Naive thymus-derived CD4-positive, alpha-beta T cell (primary cell): ENCODE measurements at regions of chr2 and their contacts with region 1.

Region 1: GRCh38 chr2:241149925-241150659 is at the start of gene PPP1R7:
- DNase-seq: peak; percentile 83 to 96 (median 93)
- ATAC-seq: peak; percentile 87
- H3K4me3 ChIP-seq: peak within 1 kb of the TSS; percentile 97
- H3K4me3 Mint-ChIP-seq: peak within 1 kb of the TSS; percentile 95 to 100 (median 98)
- H3K27ac ChIP-seq: peak within 1 kb of the TSS; percentile 71
- H3K27ac Mint-ChIP-seq: peak within 1 kb of the TSS; percentile 85 to 97 (median 94)
- H3K4me1 ChIP-seq: peaks cover 13 to 26% of the 10 kb centered on the region in 2 donors
- H3K4me1 Mint-ChIP-seq: peaks cover 33 to 58% (median 51%) of the 10 kb centered on the region in 7 donors
- H3K27me3 ChIP-seq: no peaks in the 10 kb centered on the region
- H3K27me3 Mint-ChIP-seq: no peaks in the 10 kb centered on the region
- total RNA-seq, gene PPP1R7: 39.2 to 105 (median 55.3) TPM

Region 2: GRCh38 chr2:240983361-240983995 is 166.6 kb before region 1 on chr2:
- CTCF ChIA-PET with region 1: interaction called, 7 read pairs
- POLR2A ChIA-PET with region 1: interaction called, 3 read pairs
- intact Hi-C with region 1: loop called (anchors 2 to 5 kb)
- DNase-seq: peak in 7 of 9 donors; percentile 27 to 55 (median 42)
- ATAC-seq: peak; percentile 78
- H3K4me3 ChIP-seq: no peak overlapping the region
- H3K4me3 Mint-ChIP-seq: peak overlapping the region in 1 of 10 donors; percentile 30
- H3K27ac ChIP-seq: no peak overlapping the region
- H3K27ac Mint-ChIP-seq: no peak overlapping the region
- H3K4me1 ChIP-seq: no peaks in the 10 kb centered on the region
- H3K4me1 Mint-ChIP-seq: peaks cover 0 to 5% (median 2%) of the 10 kb centered on the region in 7 donors
- H3K27me3 ChIP-seq: no peaks in the 10 kb centered on the region
- H3K27me3 Mint-ChIP-seq: peaks cover 0 to 14% (median 0%) of the 10 kb centered on the region in 5 donors

Region 3: GRCh38 chr2:241049739-241050623 is 100.1 kb before region 1 on chr2:
- CTCF ChIA-PET with region 1: no interaction called
- POLR2A ChIA-PET with region 1: no interaction called
- intact Hi-C with region 1: no loop called
- DNase-seq: no peak
- ATAC-seq: no peak
- H3K4me3 ChIP-seq: no peak overlapping the region
- H3K4me3 Mint-ChIP-seq: no peak overlapping the region
- H3K27ac ChIP-seq: no peak overlapping the region
- H3K27ac Mint-ChIP-seq: no peak overlapping the region
- H3K4me1 ChIP-seq: no peaks in the 10 kb centered on the region
- H3K4me1 Mint-ChIP-seq: no peaks in the 10 kb centered on the region
- H3K27me3 ChIP-seq: no peaks in the 10 kb centered on the region
- H3K27me3 Mint-ChIP-seq: peaks cover 0 to 8% (median 0%) of the 10 kb centered on the region in 5 donors

Region 4: GRCh38 chr2:241081643-241082340 is 68.3 kb before region 1 on chr2:
- CTCF ChIA-PET with region 1: interaction called, 30 read pairs
- POLR2A ChIA-PET with region 1: interaction called, 31 read pairs
- intact Hi-C with region 1: loop called (anchors 1 kb)
- DNase-seq: no peak
- ATAC-seq: no peak
- H3K4me3 ChIP-seq: no peak overlapping the region
- H3K4me3 Mint-ChIP-seq: no peak overlapping the region
- H3K27ac ChIP-seq: no peak overlapping the region
- H3K27ac Mint-ChIP-seq: peak overlapping the region in 7 of 9 donors; percentile 65 to 89 (median 80)
- H3K4me1 ChIP-seq: no peaks in the 10 kb centered on the region
- H3K4me1 Mint-ChIP-seq: peaks cover 0 to 36% (median 28%) of the 10 kb centered on the region in 7 donors
- H3K27me3 ChIP-seq: no peaks in the 10 kb centered on the region
- H3K27me3 Mint-ChIP-seq: no peaks in the 10 kb centered on the region

Region 5: DNA sequence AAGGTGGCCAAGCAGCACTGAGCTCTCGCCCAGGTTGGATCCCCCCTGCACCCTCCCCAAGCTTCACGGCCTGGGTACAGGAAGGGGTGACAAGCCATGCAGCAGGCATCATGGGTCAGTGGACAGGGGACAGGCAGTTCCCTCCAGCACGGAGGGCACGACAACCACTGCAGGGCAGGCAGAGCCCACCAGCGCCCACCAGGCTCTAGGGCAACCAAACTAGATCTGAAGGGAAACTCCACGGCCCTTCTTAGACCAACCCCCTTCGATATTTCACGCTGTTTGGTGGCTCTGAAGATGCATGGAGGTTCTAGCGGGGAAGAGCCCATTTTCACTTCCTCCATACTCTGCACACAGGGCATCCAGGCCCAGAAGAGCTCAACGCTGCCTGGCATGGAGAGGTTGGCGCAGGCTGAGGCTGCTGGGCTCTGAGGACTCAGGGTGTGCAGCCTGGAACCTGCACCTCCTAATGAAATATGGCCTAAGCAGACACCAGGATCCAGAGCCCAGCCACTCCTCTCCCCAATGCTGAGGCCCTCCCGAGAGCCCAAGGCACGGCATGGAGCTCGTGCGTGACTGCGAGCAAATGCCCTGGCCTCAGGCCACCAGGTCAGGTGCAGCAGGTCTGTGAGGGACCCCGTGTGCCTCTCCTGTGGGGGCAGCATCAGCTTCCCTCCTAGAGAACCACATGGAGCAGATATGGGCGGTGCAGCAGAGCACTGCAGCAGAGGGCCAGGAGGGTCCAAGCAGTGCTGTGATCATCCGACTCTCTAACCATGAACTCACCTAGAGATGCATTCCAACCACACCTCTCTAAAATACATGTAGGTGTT is 39.3 kb before region 1 on chr2:
- CTCF ChIA-PET with region 1: interaction called, 10 read pairs
- POLR2A ChIA-PET with region 1: interaction called, 150 read pairs
- intact Hi-C with region 1: no loop called
- DNase-seq: no peak
- ATAC-seq: peak; percentile 17
- H3K4me3 ChIP-seq: peak overlapping the region; percentile 56
- H3K4me3 Mint-ChIP-seq: peak overlapping the region; percentile 68 to 89 (median 82)
- H3K27ac ChIP-seq: peak overlapping the region; percentile 70
- H3K27ac Mint-ChIP-seq: peak overlapping the region; percentile 81 to 99 (median 98)
- H3K4me1 ChIP-seq: peaks cover 36 to 42% of the 10 kb centered on the region in 2 donors
- H3K4me1 Mint-ChIP-seq: peaks cover 22 to 64% (median 63%) of the 10 kb centered on the region in 7 donors
- H3K27me3 ChIP-seq: no peaks in the 10 kb centered on the region
- H3K27me3 Mint-ChIP-seq: no peaks in the 10 kb centered on the region

Region 6: DNA sequence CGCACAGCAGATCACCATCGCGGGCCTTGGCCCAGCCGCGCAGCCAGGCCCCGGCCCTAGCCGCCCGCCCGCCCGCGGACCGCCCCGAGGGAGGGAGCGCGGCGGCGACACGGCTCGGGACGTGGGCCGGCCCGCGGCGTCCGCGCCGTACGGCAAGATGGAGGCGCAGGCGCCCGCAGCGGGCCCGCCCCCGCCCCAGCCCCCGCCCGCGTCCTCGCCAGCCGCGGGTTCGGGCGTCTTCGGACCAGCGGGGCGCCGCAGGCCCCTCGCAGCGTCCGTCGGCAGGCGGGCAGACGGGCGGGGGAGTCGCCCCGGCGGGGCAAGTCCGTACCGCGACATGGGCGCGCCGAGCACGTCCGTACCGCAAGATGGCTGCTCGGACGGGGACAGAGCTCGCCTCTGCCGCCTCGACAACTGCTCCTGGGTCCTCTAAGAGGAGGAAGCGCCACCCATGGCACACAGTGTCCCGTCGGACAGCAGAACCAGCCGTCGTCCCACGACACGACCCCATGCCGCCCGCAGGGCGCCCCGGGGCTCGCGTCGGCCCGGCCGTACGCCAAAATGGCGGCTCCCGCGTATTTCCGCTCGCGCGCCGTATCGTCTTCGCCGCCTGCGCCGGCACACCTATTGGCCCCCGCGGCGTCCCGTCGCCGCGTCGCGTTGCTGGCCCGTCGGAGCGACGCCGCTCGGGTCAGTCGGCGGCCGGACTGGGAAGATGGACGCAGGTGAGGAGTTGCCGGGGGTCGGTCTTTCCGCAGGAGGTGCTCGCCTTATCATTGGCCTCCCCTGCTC is 487.1 kb after region 1 on chr2 and contains the starts of genes ATG4B and THAP4:
- CTCF ChIA-PET with region 1: no interaction called
- POLR2A ChIA-PET with region 1: no interaction called
- intact Hi-C with region 1: loop called (anchors 1 to 5 kb)
- DNase-seq: peak; percentile 61 to 89 (median 79)
- ATAC-seq: peak; percentile 82
- H3K4me3 ChIP-seq: peak within 1 kb of the TSS; percentile 99
- H3K4me3 Mint-ChIP-seq: peak within 1 kb of the TSS; percentile 85 to 98 (median 92)
- H3K27ac ChIP-seq: peak within 1 kb of the TSS; percentile 99
- H3K27ac Mint-ChIP-seq: peak within 1 kb of the TSS; percentile 48 to 98 (median 94)
- H3K4me1 ChIP-seq: peaks cover 26 to 27% of the 10 kb centered on the region in 2 donors
- H3K4me1 Mint-ChIP-seq: peaks cover 43 to 63% (median 55%) of the 10 kb centered on the region in 7 donors
- H3K27me3 ChIP-seq: no peaks in the 10 kb centered on the region
- H3K27me3 Mint-ChIP-seq: no peaks in the 10 kb centered on the region
- total RNA-seq, gene ATG4B: 87.2 to 131 (median 95.0) TPM
- total RNA-seq, gene THAP4: 26.4 to 34.8 (median 28.1) TPM